Activated CD4-positive, alpha-beta T cell treated with anti-CD3 and anti-CD28 coated beads for 36 hours (primary cell): ENCODE measurements at regions of chr13 and their contacts with region 1.

Region 1: DNA sequence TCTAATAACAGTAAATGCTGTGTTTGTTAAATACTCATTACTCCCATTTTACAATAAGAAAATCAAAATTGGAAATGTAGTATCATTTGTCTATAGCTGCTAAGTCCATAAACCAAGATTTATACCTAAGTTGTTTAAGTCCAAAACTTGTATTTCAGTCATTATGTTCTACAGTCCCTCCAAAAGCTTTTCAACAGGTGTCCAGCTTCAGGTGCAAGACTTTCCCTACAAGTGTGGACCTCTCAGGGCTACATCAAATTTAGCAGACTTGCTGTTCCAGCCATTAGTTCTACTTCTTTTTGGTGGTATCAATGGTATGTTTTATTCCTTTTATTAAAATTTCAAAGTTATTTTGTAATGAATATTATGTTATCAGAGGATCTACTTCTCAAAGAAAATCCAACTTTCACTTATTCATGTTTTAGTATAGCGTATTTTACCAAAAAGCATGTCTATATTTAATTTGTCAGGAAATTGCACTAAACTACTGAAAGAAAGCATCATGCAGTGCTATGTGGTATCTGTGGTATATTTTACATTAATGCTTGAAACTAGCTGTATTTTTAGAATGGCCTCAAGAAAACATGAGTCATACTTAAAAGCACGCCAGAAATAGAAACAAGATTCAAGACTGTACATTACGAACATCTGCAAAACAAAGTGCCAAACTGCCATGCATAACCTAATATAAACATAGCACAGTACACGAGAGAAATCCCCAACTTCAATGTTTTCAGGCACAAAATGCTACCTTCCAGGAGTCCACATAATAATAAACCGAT is 44.5 kb downstream of the VWA8 start:
- DNase-seq: no peak
- ATAC-seq: peak; percentile 66
- H3K4me3 Mint-ChIP-seq: peak overlapping the region; percentile 57
- H3K27ac Mint-ChIP-seq: peak overlapping the region; percentile 97
- H3K4me1 Mint-ChIP-seq: peaks cover 67% of the 10 kb centered on the region
- H3K27me3 Mint-ChIP-seq: no peaks in the 10 kb centered on the region

Region 2: DNA sequence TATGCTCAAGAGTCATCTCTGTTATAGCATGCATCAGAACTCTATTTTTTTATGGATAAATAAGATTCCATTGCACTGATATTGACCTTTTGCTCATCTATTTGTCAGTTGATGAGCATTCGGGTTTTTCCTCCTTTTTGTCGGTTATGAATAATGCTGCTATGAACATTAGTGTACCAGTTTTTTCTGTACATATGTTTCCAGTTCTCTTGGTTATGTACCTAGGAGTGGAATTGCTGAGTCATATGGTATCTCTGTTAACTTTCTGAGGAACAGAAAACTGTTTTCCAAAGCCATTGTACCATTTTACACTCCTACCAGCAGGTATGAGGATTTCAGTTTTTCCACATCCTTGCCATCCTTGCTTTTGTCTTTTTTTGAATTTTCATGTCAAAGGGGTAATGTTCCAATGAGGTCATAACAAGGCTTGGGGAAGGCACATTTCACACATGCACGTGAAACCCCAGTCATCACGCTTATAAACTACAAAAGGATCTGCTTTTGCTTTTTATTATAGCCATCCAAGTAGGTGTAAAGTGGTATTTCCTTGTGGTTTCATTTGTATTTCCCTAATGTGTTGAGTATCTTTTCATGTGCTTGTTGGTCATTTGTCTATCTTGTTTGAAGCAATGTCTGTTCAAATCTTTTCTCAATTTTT is 736.6 kb before region 1 on chr13:
- CTCF ChIA-PET with region 1: no interaction called
- POLR2A ChIA-PET with region 1: no interaction called
- intact Hi-C with region 1: loop called in 1 of 2 experiments (anchors 5 kb)
- DNase-seq: peak; percentile 20
- ATAC-seq: peak; percentile 79
- H3K4me3 Mint-ChIP-seq: no peak overlapping the region
- H3K27ac Mint-ChIP-seq: peak overlapping the region; percentile 66
- H3K4me1 Mint-ChIP-seq: peaks cover 16% of the 10 kb centered on the region
- H3K27me3 Mint-ChIP-seq: no peaks in the 10 kb centered on the region

Region 3: DNA sequence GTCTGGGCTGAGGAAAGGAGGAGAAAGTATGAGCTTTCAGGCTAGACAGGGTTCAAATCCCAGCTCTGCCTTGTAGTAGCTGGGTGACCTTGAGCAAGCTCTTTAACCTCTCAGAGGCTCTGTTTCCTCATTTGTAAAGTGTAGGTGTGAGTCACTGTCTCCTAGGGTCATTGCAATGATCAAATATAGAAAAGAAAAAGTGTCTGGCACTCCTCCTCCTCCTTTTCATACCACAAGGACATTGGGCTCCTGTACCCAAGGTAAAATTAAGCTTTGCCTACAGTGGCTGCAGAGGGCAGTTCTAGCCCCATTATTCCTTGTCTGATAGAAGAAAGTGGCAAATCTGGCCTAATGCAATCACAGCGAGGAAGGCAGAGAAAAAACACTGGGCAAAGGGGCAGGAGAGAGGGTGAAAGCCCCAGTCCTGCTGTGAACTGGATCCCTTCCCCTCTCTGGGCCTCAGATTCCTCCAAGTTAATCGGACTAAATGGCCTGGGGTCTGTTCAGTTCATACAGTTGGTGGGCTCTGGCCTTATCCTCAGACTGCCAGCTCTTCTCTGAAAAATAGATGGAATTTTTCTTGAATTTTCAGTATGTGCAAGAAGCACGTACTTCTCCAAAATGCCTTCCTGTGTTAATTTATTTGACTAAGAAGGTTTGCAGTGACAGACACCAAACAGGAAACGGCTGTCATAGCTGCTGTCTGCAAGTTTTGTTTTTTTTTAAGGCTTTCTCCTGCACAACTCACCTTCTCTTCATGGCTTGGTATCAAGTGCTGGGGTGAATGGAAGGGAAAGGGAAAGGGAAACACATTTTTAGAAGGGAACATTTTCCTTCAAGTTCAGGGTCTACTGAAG is 423.7 kb before region 1 on chr13:
- CTCF ChIA-PET with region 1: no interaction called
- POLR2A ChIA-PET with region 1: no interaction called
- intact Hi-C with region 1: loop called in 1 of 2 experiments (anchors 10 kb)
- DNase-seq: peak; percentile 44
- ATAC-seq: peak; percentile 76
- H3K4me3 Mint-ChIP-seq: peak overlapping the region; percentile 29
- H3K27ac Mint-ChIP-seq: peak overlapping the region; percentile 92
- H3K4me1 Mint-ChIP-seq: peaks cover 89% of the 10 kb centered on the region
- H3K27me3 Mint-ChIP-seq: no peaks in the 10 kb centered on the region

Region 4: DNA sequence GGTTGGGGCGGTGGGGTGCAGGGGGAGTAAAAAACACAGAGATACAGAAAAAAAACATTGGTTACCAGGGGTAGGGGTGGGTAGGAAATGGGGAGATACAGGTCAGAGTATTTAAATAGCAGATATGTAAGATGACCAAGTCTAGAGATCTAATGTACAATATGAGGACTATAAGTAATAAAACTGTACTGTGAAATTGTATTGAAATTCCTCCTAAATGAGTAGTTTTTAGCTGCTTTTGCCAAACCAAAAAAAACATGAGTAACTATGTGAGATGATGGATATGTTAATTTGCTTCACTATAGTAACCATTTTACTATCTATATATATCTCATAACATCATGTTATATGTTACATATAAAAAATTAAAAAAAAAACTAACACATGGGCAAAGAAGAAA is 15.0 kb after region 1 on chr13:
- CTCF ChIA-PET with region 1: interaction called, 11 read pairs
- POLR2A ChIA-PET with region 1: interaction called, 13 read pairs
- intact Hi-C with region 1: loop called (anchors 1 kb)
- DNase-seq: no peak
- ATAC-seq: peak; percentile 53
- H3K4me3 Mint-ChIP-seq: no peak overlapping the region
- H3K27ac Mint-ChIP-seq: peak overlapping the region; percentile 60
- H3K4me1 Mint-ChIP-seq: peaks cover 64% of the 10 kb centered on the region
- H3K27me3 Mint-ChIP-seq: no peaks in the 10 kb centered on the region

Region 5: DNA sequence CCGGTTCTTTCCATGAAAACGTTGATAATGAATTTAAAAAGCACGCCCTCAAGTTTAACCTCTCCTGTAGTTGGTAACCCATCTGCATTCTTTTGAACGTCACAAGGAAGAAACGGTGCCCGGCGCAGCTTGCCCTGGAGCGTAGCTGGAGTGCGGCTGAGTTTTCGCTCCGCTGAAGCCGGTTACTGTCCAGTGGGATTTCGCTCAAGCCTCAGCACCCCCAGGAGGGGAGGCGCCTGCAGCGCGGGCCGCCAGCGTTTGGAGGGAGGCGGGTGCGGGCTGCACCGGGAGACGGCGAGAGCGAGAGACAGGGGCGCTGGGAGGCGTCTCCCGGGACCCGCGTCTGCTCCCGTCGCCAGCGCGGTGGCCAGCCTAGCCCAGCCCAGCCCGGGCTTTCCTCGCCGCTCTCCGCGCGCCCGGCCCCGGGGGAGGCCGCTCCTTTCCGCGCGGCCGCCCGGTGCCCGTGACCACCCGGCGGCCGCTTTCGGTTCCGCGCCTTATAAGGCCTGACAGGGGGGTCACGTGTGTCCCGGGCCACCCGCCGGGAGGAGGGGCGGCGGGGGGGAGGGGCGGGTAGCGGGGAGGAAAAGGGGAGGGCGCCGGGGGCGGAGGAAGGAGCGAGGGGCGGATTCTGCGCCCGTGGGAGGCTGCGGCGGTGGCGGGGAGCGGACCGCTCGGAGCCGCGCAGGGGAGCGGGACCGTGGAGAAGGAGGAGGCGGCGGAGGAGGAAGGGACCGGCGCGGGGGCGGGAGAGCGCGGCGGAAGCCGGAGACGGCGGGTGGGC is 123.8 kb after region 1 on chr13:
- CTCF ChIA-PET with region 1: no interaction called
- POLR2A ChIA-PET with region 1: no interaction called
- intact Hi-C with region 1: loop called in 1 of 2 experiments (anchors 2 kb)
- DNase-seq: peak; percentile 92
- ATAC-seq: peak; percentile 77
- H3K4me3 Mint-ChIP-seq: peak overlapping the region; percentile 74
- H3K27ac Mint-ChIP-seq: peak overlapping the region; percentile 76
- H3K4me1 Mint-ChIP-seq: peaks cover 23% of the 10 kb centered on the region
- H3K27me3 Mint-ChIP-seq: peaks cover 5% of the 10 kb centered on the region

Region 6: GRCh38 chr13:42377640-42378382 is 461.4 kb after region 1 on chr13:
- CTCF ChIA-PET with region 1: no interaction called
- POLR2A ChIA-PET with region 1: no interaction called
- intact Hi-C with region 1: loop called in 1 of 2 experiments (anchors 5 kb)
- DNase-seq: peak; percentile 60
- ATAC-seq: peak; percentile 83
- H3K4me3 Mint-ChIP-seq: no peak overlapping the region
- H3K27ac Mint-ChIP-seq: peak overlapping the region; percentile 97
- H3K4me1 Mint-ChIP-seq: peaks cover 74% of the 10 kb centered on the region
- H3K27me3 Mint-ChIP-seq: no peaks in the 10 kb centered on the region